Caco-2 (cell line): ENCODE measurements at regions of chr15 and their contacts with region 1.

Region 1: GRCh38 chr15:96356494-96357455 is 26.3 kb downstream of the NR2F2 start:
- DNase-seq: peak; percentile 82 to 92
- H3K4me3 ChIP-seq: peak overlapping the region; percentile 80
- H3K4me3 Mint-ChIP-seq: peak overlapping the region; percentile 82
- H3K27ac Mint-ChIP-seq: peak overlapping the region; percentile 83
- H3K4me1 ChIP-seq: no peaks in the 10 kb centered on the region
- H3K4me1 Mint-ChIP-seq: peaks cover 8% of the 10 kb centered on the region
- H3K27me3 ChIP-seq: no peaks in the 10 kb centered on the region
- H3K27me3 Mint-ChIP-seq: no peaks in the 10 kb centered on the region
- CTCF ChIP-seq: peak; percentile 90 to 96

Region 2: GRCh38 chr15:96462777-96463750 is 106.3 kb after region 1 on chr15:
- CTCF ChIA-PET with region 1: no interaction called
- POLR2A ChIA-PET with region 1: no interaction called
- intact Hi-C with region 1: loop called (anchors 5 kb)
- DNase-seq: no peak
- H3K4me3 ChIP-seq: no peak overlapping the region
- H3K4me3 Mint-ChIP-seq: no peak overlapping the region
- H3K27ac Mint-ChIP-seq: no peak overlapping the region
- H3K4me1 ChIP-seq: no peaks in the 10 kb centered on the region
- H3K4me1 Mint-ChIP-seq: no peaks in the 10 kb centered on the region
- H3K27me3 ChIP-seq: no peaks in the 10 kb centered on the region
- H3K27me3 Mint-ChIP-seq: peaks cover 16% of the 10 kb centered on the region
- CTCF ChIP-seq: peak; percentile 19 to 31

Region 3: GRCh38 chr15:96585484-96586386 is 229.0 kb after region 1 on chr15:
- CTCF ChIA-PET with region 1: no interaction called
- POLR2A ChIA-PET with region 1: no interaction called
- intact Hi-C with region 1: loop called (anchors 2 kb)
- DNase-seq: no peak
- H3K4me3 ChIP-seq: no peak overlapping the region
- H3K4me3 Mint-ChIP-seq: no peak overlapping the region
- H3K27ac Mint-ChIP-seq: no peak overlapping the region
- H3K4me1 ChIP-seq: no peaks in the 10 kb centered on the region
- H3K4me1 Mint-ChIP-seq: no peaks in the 10 kb centered on the region
- H3K27me3 ChIP-seq: no peaks in the 10 kb centered on the region
- H3K27me3 Mint-ChIP-seq: peaks cover 8% of the 10 kb centered on the region
- CTCF ChIP-seq: peak; percentile 8 to 15

Region 4: GRCh38 chr15:96701443-96701842 is 344.7 kb after region 1 on chr15:
- CTCF ChIA-PET with region 1: no interaction called
- POLR2A ChIA-PET with region 1: no interaction called
- intact Hi-C with region 1: no loop called
- DNase-seq: no peak
- H3K4me3 ChIP-seq: no peak overlapping the region
- H3K4me3 Mint-ChIP-seq: no peak overlapping the region
- H3K27ac Mint-ChIP-seq: no peak overlapping the region
- H3K4me1 ChIP-seq: no peaks in the 10 kb centered on the region
- H3K4me1 Mint-ChIP-seq: no peaks in the 10 kb centered on the region
- H3K27me3 ChIP-seq: no peaks in the 10 kb centered on the region
- H3K27me3 Mint-ChIP-seq: peaks cover 3% of the 10 kb centered on the region
- CTCF ChIP-seq: no peak

Region 5: DNA sequence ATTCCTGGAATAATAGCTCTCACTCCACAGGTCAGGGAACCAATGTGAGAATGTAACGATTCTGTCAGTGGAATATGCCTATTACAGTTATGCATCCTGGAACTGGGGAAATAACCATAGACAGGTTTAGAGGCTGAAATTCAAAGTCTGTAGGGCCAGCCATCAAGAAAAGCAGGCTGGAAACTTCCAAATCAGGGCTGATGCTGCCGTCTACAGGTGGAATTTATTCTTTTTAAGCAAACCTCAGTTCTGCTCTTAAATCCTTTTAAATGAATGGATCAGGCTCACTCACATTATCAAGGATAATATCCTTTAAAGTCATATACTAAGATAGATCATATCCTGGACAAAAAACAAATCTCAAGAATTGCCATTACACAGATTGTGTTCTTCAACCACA is 673.5 kb after region 1 on chr15:
- CTCF ChIA-PET with region 1: no interaction called
- POLR2A ChIA-PET with region 1: no interaction called
- intact Hi-C with region 1: loop called (anchors 1 kb)
- DNase-seq: no peak
- H3K4me3 ChIP-seq: no peak overlapping the region
- H3K4me3 Mint-ChIP-seq: no peak overlapping the region
- H3K27ac Mint-ChIP-seq: no peak overlapping the region
- H3K4me1 ChIP-seq: peaks cover 10% of the 10 kb centered on the region; the same call in 1 of the 2 replicates
- H3K4me1 Mint-ChIP-seq: peaks cover 5% of the 10 kb centered on the region
- H3K27me3 ChIP-seq: no peaks in the 10 kb centered on the region
- H3K27me3 Mint-ChIP-seq: no peaks in the 10 kb centered on the region
- CTCF ChIP-seq: peak in 1 of 2 experiments; percentile 11

Region 6: DNA sequence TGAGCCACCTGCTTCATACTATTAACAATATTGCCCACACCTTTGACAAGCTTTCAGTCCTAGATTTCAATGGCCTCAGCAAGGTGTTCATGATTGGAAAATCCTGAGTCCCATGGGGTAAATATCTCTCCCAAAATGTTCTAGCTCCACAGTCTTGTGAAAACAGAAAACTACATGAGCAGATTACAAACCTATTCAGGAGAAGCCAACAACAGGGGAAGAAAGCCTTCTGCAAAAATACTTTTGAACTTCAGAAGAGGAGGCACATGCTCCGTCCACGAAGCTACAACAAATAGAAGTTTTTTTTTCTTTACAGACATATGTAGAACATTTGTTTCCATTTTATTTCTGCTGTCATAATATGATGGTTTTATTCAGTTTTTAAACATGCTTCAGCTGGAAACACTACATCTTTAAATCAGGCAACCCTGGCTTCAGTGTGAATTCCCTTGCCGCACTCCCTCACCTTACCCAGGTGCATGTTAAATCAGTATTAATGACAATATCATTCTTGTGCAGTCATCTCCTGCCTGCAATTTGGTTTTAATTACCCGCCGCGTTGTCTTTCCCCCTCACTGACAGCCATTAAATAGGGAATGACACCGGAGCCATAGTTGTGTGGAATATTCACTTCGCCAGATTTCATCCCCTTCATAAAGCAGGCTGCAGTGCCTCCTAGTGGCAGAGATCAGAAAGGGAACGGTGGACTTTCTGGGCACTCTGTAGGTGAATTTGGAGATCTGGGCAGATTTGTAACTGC is 878.3 kb after region 1 on chr15:
- CTCF ChIA-PET with region 1: no interaction called
- POLR2A ChIA-PET with region 1: no interaction called
- intact Hi-C with region 1: loop called (anchors 1 kb)
- DNase-seq: peak in 1 of 2 experiments; percentile 56
- H3K4me3 ChIP-seq: no peak overlapping the region
- H3K4me3 Mint-ChIP-seq: no peak overlapping the region
- H3K27ac Mint-ChIP-seq: no peak overlapping the region
- H3K4me1 ChIP-seq: no peaks in the 10 kb centered on the region
- H3K4me1 Mint-ChIP-seq: peaks cover 5% of the 10 kb centered on the region
- H3K27me3 ChIP-seq: no peaks in the 10 kb centered on the region
- H3K27me3 Mint-ChIP-seq: peaks cover 11% of the 10 kb centered on the region
- CTCF ChIP-seq: peak; percentile 77 to 79

Region 7: DNA sequence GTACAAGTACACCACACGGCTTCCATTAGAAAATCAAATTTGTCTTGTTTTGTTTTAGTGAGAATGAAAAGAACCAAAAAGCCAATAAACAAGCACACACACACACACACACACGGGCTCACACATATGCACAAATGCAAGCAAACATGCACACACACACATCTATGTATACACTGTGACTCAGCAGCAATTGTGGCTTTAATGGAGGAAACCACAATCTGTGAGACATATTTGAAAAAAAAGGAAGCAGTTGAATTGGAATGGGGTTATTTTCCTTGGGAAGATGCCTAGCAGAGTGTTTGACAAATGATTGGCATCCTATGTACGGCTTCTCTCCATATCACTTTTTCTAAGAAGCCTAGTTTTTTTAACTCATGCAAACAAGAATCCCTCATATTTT is 1402.6 kb after region 1 on chr15:
- CTCF ChIA-PET with region 1: no interaction called
- POLR2A ChIA-PET with region 1: no interaction called
- intact Hi-C with region 1: loop called (anchors 5 kb)
- DNase-seq: no peak
- H3K4me3 ChIP-seq: no peak overlapping the region
- H3K4me3 Mint-ChIP-seq: no peak overlapping the region
- H3K27ac Mint-ChIP-seq: no peak overlapping the region
- H3K4me1 ChIP-seq: no peaks in the 10 kb centered on the region
- H3K4me1 Mint-ChIP-seq: no peaks in the 10 kb centered on the region
- H3K27me3 ChIP-seq: no peaks in the 10 kb centered on the region
- H3K27me3 Mint-ChIP-seq: peaks cover 19% of the 10 kb centered on the region
- CTCF ChIP-seq: no peak